ENCODE measurements at regions of chr13 and their contacts with region 1.

Region 1: DNA sequence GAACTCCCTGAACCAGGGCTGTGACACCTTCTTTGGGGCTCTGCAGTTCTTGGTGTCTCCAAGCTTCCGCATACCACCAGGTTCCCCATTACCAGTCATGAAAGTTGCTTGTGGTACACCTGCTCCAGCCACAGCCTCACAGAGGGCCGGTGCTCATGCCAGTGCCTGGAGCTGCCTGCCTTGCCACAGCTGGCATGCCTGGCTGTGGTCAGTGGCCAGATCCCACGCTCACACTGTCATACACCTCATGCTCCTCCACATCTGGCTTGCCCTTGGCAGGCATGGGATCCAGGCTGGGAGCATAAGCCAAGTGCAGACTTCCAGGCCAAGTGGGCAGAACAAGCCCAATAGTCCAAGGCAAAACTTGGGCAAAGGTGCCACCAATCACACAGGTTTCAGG is 1054.9 kb downstream of the SLITRK5 start:
- DNase-seq: no peak
- H3K4me3 ChIP-seq: no peak overlapping the region
- H3K27ac ChIP-seq: no peak overlapping the region
- H3K4me1 ChIP-seq: no peaks in the 10 kb centered on the region
- H3K27me3 ChIP-seq: no peaks in the 10 kb centered on the region
- CTCF ChIP-seq: no peak

Region 2: DNA sequence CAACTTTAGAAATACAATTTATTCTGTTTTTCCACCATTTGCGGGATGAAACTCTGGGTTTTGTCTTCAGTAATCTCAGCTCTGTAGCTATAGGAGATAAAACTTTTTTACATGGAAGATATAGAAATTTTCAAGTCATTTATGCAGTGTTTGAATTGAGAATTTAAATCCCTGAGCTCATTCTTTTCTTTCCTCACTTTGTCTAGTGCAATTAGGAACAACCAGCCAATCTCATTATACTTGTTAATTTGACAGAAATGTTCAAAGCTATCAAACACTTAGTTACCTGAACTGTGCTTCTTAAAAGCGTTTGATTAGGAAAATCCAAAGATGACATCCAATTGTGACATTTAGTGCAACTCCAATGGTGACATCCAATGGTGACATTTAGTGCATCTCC is 40.6 kb before region 1 on chr13:
- CTCF ChIA-PET with region 1: no interaction called
- dilution Hi-C with region 1: loop called (anchors 5 kb)
- in situ Hi-C with region 1: no loop called
- intact Hi-C with region 1: no loop called
- DNase-seq: no peak
- H3K4me3 ChIP-seq: no peak overlapping the region
- H3K27ac ChIP-seq: no peak overlapping the region
- H3K4me1 ChIP-seq: no peaks in the 10 kb centered on the region
- H3K27me3 ChIP-seq: no peaks in the 10 kb centered on the region
- CTCF ChIP-seq: no peak

Measured in mammary epithelial cell (primary cell).